Heart right ventricle (tissue), 16 donors: ENCODE measurements at regions of chr4 and their contacts with region 1.

Region 1: DNA sequence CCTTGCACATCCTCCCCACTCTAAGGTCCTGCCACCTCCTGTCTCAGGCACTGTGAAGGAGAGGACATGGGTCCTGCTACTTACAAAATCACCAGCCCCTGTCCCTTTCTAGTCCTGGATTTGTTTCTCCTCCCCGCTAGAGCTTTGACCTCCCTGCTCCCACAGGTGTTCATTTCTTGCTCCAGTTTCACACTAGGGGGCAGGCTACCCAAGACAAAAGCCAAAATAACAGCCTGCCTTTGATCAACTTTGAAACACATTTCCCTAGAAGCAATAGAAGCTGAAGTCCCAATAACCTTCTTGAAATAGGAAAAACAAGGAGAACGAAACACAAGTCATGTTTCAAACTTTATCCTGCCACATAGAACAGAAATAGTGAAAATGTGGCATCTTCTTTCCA is 164.4 kb downstream of the QDPR start:
- DNase-seq: peak in 1 of 2 donors; percentile 17
- ATAC-seq: peak in 1 of 8 donors; percentile 37
- H3K4me3 ChIP-seq: no peak overlapping the region
- H3K27ac ChIP-seq: no peak overlapping the region
- H3K4me1 ChIP-seq: no peaks in the 10 kb centered on the region
- H3K27me3 ChIP-seq: no peaks in the 10 kb centered on the region
- CTCF ChIP-seq: peak in 8 of 9 donors; percentile 25 to 66 (median 57)

Region 2: GRCh38 chr4:16532240-16532970 is 815.0 kb before region 1 on chr4:
- intact Hi-C with region 1: no loop called
- DNase-seq: peak in 1 of 2 donors; percentile 27
- ATAC-seq: peak; percentile 34 to 83 (median 75)
- H3K4me3 ChIP-seq: no peak overlapping the region
- H3K27ac ChIP-seq: peak overlapping the region in 5 of 10 donors; percentile 5 to 43 (median 23)
- H3K4me1 ChIP-seq: peaks cover 6 to 47% (median 25%) of the 10 kb centered on the region in 9 donors
- H3K27me3 ChIP-seq: no peaks in the 10 kb centered on the region
- CTCF ChIP-seq: no peak

Region 3: DNA sequence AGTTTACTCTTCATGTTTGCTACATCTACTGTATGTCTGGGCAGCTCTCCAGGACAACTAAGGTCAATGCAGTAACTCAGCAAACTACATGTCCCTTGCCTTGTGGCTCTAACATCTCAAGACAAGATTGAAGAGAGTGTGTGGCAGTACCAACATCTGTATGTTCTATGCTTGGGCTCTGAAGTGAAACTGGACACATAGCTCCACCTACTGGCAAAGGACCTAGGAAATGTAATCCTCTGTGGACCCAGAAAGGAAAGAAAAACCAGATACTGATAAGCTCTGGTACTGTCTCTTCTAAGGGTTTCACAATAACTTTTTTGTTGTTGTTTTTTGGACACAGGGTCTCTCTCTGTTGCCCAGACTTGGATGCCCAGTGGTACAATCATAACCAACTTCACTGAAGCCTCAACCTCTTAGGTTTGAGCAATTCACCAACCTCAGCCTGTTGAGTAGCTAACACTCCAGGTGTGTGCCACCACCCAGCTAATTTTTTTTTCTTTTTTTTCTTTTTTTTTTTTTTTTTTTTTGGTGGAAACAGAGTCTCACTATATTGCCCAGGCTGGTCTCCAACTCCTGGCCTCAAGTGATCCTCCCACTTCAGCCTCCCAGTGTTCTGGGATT is 100.3 kb after region 1 on chr4:
- intact Hi-C with region 1: loop called in 9 of 10 experiments (anchors 1 to 10 kb)
- DNase-seq: peak in 1 of 2 donors; percentile 66
- ATAC-seq: peak; percentile 55 to 91 (median 86)
- H3K4me3 ChIP-seq: no peak overlapping the region
- H3K27ac ChIP-seq: no peak overlapping the region
- H3K4me1 ChIP-seq: peaks cover 0 to 9% (median 0%) of the 10 kb centered on the region in 9 donors
- H3K27me3 ChIP-seq: no peaks in the 10 kb centered on the region
- CTCF ChIP-seq: peak; percentile 22 to 78 (median 72)

Region 4: GRCh38 chr4:17468371-17469221 is 121.2 kb after region 1 on chr4:
- intact Hi-C with region 1: loop called in 4 of 10 experiments (anchors 5 to 10 kb)
- DNase-seq: peak in 1 of 2 donors; percentile 15
- ATAC-seq: no peak
- H3K4me3 ChIP-seq: no peak overlapping the region
- H3K27ac ChIP-seq: no peak overlapping the region
- H3K4me1 ChIP-seq: peaks cover 0 to 5% (median 0%) of the 10 kb centered on the region in 9 donors
- H3K27me3 ChIP-seq: no peaks in the 10 kb centered on the region
- CTCF ChIP-seq: peak; percentile 41 to 72 (median 56)

Region 5: GRCh38 chr4:17480210-17480927 is 132.9 kb after region 1 on chr4:
- intact Hi-C with region 1: no loop called
- DNase-seq: peak in 1 of 2 donors; percentile 18
- ATAC-seq: peak in 6 of 8 donors; percentile 70 to 89 (median 83)
- H3K4me3 ChIP-seq: no peak overlapping the region
- H3K27ac ChIP-seq: peak overlapping the region in 2 of 10 donors; percentile 1 to 52
- H3K4me1 ChIP-seq: no peaks in the 10 kb centered on the region
- H3K27me3 ChIP-seq: no peaks in the 10 kb centered on the region
- CTCF ChIP-seq: no peak

Region 6: DNA sequence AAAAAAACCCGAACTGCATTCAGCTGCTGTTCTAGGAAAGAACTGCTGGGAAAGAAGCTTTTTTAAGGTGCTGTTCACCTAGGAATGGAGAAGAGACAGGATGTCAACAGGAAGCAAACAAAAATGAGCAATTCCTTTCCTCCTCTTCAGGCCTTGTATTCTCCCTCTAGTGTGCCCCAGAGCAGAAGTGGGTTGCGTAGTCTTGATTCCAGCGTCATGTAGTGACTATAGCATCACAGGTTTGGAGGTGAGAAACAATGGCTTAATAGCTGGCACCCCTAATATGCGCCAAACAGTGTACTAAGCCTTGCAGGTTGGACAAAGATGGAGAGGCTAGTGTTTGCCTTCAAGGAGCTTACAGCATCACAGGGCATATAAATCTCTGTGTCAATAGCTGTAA is 820.4 kb after region 1 on chr4:
- intact Hi-C with region 1: no loop called
- DNase-seq: no peak
- ATAC-seq: no peak
- H3K4me3 ChIP-seq: no peak overlapping the region
- H3K27ac ChIP-seq: no peak overlapping the region
- H3K4me1 ChIP-seq: no peaks in the 10 kb centered on the region
- H3K27me3 ChIP-seq: no peaks in the 10 kb centered on the region
- CTCF ChIP-seq: no peak